ENCODE measurements at regions of chr16 and their contacts with region 1.

Region 1: DNA sequence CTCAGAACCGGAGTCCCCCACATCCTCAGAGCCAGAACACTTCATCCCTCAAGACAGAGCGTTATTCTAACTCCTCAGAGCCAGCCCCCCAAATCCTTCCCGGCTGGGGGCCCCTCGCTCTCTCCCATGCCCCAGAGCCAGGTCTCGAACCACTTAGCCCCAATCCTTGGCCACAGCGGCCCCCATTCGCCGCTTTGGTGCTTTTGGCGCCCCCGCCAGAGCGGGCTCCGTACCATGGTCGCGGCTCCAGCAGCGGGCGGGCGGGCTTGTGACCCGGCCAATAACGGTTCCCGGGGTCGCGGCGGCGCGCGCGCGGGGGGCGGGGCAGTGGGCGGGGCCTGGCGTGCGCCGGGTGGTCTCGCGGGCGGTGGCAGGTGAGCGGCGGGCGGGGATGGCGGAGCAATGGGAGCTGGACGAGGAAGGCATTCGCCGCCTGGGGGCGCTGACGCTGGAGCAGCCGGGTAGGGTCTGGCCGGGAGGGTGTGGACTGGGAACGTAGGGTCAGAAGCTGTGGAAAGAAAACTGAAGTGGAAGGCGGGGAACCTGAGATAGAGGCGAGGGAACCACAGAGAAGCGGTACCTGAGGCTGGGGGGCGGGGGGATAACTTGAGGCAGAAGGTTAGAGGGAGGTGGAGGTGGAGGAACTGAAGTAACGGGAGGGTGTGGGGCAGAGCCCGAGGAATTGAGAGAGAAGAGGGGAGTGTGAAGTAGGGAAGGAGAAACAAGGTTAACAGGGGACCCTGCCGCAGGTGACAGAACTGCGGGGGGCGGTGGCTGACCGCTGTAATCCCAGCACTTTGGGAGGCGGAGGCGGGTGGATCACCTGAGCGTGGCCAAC is at the starts of genes KCTD19 and LRRC36:
- DNase-seq: peak; percentile 97
- H3K4me3 Mint-ChIP-seq: peak within 1 kb of the TSS; percentile 79
- H3K27ac Mint-ChIP-seq: peak within 1 kb of the TSS; percentile 4
- H3K4me1 Mint-ChIP-seq: peaks cover 40% of the 10 kb centered on the region
- H3K27me3 Mint-ChIP-seq: no peaks in the 10 kb centered on the region
- CTCF ChIP-seq: peak; percentile 67
- total RNA-seq, gene KCTD19: 3.8 and 5.6 TPM in 2 replicates
- total RNA-seq, gene LRRC36: 7.1 and 9.2 TPM in 2 replicates

Region 2: DNA sequence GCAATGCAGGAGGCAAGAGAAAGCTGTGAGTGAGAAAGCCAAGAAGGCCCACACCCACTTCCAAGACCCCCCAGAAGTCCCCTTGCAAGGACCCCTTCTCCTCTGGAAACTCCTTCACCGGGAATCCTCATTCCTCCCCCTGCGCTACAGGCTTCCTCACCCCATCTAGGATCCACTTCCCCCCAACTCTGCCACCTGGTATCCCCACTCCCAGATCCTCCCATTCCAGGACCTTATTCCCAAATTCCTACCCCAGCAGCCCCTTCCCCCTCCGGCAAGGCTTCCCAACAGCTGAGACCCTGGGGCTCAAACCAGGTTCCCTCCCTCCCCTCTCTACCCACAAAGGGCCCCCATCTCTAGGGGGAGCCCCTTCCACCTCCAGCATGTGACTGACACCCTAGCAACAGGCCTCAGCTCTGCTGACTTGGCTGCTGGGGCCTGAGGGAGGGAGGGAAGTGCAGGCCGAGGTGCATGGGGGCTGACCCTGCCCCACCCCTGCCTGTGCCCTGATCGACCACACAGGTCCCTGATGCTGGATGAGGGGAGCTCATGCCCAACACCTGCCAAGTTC is 160.0 kb before region 1 on chr16:
- CTCF ChIA-PET with region 1: interaction called, 10 read pairs
- intact Hi-C with region 1: no loop called
- DNase-seq: no peak
- H3K4me3 Mint-ChIP-seq: no peak overlapping the region
- H3K27ac Mint-ChIP-seq: no peak overlapping the region
- H3K4me1 Mint-ChIP-seq: peaks cover 19% of the 10 kb centered on the region
- H3K27me3 Mint-ChIP-seq: no peaks in the 10 kb centered on the region
- CTCF ChIP-seq: no peak

Region 3: GRCh38 chr16:67339453-67339852 is 12.8 kb after region 1 on chr16:
- CTCF ChIA-PET with region 1: interaction called, 17 read pairs
- intact Hi-C with region 1: no loop called
- DNase-seq: no peak
- H3K4me3 Mint-ChIP-seq: no peak overlapping the region
- H3K27ac Mint-ChIP-seq: no peak overlapping the region
- H3K4me1 Mint-ChIP-seq: no peaks in the 10 kb centered on the region
- H3K27me3 Mint-ChIP-seq: no peaks in the 10 kb centered on the region
- CTCF ChIP-seq: no peak

Region 4: DNA sequence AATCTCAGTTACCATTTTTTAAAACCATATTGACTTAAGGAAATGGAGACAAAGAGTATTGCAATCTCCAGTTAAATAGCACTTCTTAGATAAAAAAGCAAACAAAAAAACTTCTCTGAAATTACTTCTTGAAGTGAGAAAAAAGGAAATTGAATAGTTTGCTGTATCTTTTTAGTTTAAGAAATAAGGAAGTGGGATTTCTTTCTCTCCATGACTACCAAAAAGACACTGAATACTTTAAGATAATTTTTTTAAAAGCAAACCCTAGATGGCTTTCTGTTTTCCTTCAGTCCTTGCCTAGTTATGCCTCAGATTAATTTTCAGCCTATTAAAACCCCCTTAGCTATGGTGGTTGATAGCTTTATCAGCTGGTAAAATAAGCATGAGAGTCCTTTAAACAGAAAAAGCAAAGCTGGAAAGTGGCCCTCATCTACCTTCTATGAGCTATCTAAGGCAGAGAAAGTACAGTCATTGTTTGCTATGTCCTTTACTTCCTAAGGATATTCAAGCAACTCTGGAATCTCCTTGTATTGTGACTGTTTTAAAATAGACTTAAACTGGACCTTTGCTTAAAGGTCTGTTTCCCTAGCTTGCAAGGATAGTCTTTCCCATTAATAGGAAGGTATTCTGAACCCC is 38.0 kb after region 1 on chr16:
- CTCF ChIA-PET with region 1: interaction called, 4 read pairs
- intact Hi-C with region 1: loop called (anchors 5 kb)
- DNase-seq: no peak
- H3K4me3 Mint-ChIP-seq: no peak overlapping the region
- H3K27ac Mint-ChIP-seq: peak overlapping the region; percentile 78
- H3K4me1 Mint-ChIP-seq: peaks cover 43% of the 10 kb centered on the region
- H3K27me3 Mint-ChIP-seq: no peaks in the 10 kb centered on the region
- CTCF ChIP-seq: no peak

Region 5: DNA sequence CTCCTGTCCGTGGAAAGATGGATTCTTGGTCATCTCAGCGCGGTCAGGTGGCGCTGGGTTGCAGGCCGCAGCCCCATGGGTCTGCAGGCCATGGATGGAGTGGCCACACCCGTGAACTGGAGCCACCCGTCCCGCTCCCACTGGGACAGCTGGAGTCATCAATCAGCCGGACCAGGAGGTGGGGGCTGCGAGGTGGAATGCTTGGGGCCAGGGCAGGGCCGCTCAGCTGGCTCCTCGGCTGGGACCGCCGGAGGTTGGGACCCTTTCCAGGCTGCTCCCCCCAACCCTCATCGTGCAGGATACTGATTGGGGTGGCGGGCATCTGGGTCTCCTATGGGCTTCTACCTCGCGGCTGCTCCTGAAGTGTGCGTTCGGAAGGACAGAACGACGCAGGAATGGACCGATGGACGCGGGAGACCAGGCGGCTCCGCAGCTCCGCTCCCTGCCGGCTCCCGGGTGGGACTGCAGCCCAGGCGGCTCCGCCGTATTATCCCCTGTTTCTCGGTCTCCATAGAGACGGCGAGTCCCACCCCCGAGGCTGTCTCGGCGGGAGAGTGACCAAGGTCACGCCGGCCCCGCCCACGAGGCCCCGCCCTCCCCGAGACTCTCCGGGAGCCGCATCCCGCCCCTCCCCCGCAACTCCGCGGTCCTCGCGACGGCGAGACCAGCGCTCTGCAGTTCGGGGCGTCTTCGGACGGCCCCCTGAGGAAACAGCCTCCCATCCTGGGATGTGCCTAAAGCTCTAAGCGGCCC is 66.5 kb after region 1 on chr16 and contains the start of gene TPPP3:
- CTCF ChIA-PET with region 1: interaction called, 18 read pairs
- intact Hi-C with region 1: loop called (anchors 2 kb)
- DNase-seq: peak; percentile 94
- H3K4me3 Mint-ChIP-seq: peak within 1 kb of the TSS; percentile 74
- H3K27ac Mint-ChIP-seq: peak within 1 kb of the TSS; percentile 37
- H3K4me1 Mint-ChIP-seq: peaks cover 45% of the 10 kb centered on the region
- H3K27me3 Mint-ChIP-seq: no peaks in the 10 kb centered on the region
- CTCF ChIP-seq: peak; percentile 69
- total RNA-seq, gene TPPP3: 8.5 and 8.8 TPM in 2 replicates

Region 6: GRCh38 chr16:67399181-67399733 is 72.6 kb after region 1 on chr16:
- CTCF ChIA-PET with region 1: interaction called, 28 read pairs
- intact Hi-C with region 1: loop called (anchors 2 kb)
- DNase-seq: peak; percentile 83
- H3K4me3 Mint-ChIP-seq: no peak overlapping the region
- H3K27ac Mint-ChIP-seq: no peak overlapping the region
- H3K4me1 Mint-ChIP-seq: peaks cover 35% of the 10 kb centered on the region
- H3K27me3 Mint-ChIP-seq: no peaks in the 10 kb centered on the region
- CTCF ChIP-seq: peak; percentile 94

Measured in Calu3 (cell line).